Activated T-helper 1 cell treated with anti-CD3 and anti-CD28 coated beads, Interleukin-12 subunit alpha, Interleukin-12 subunit beta, Interleukin-2, Interleukin-4 antibody, amounts not matched to agents 30 ng/mL and 10 ng/mL and 1 ng/mL, durations not matched to agents 14 hours and 24 hours and 36 hours (primary cell): ENCODE measurements at regions of chr12 and their contacts with region 1.

Region 1: DNA sequence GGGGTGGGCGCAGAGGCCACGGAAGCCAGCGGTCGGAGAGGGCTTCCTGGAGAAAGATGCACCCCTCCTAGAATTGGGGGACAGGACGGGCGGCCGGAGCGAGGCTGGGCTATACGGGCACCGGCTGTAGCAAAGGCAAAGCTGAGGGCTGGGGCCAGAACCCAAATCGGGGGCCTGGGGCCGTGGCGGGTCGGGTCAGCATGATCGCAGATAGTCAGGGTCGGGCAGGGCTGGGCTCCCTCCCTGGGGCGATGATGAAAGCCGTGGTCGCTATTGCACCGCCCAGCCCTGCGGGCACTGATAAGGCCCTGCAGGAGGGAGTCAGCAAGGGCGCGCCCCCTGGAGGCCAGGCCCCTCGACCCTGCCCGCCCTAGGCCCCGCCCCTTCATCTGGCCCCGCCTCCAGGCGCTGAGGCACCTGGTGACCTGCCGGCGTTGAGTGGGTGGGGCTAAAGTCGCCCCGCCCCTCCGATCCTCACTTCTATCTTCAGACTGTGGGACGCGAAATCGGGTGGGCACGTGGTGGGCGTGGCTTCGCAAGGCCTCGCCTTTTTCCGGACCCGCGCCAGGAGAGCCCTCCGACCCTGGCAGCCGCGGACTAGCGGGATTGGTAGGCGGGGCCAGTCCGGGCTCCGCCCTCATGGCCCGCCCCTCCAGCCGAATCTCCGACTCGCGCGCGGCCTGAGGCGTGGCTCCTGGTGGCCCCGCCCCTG is 418 bp upstream of the SH2B3 start:
- DNase-seq: peak; percentile 95
- H3K4me3 Mint-ChIP-seq: peak overlapping the region; percentile 93
- H3K27ac Mint-ChIP-seq: peak overlapping the region; percentile 99
- H3K4me1 Mint-ChIP-seq: peaks cover 44% of the 10 kb centered on the region
- H3K27me3 Mint-ChIP-seq: peaks cover 10% of the 10 kb centered on the region

Region 2: GRCh38 chr12:111276146-111276545 is 129.2 kb before region 1 on chr12:
- intact Hi-C with region 1: no loop called
- DNase-seq: no peak
- H3K4me3 Mint-ChIP-seq: no peak overlapping the region
- H3K27ac Mint-ChIP-seq: no peak overlapping the region
- H3K4me1 Mint-ChIP-seq: no peaks in the 10 kb centered on the region
- H3K27me3 Mint-ChIP-seq: no peaks in the 10 kb centered on the region

Region 3: DNA sequence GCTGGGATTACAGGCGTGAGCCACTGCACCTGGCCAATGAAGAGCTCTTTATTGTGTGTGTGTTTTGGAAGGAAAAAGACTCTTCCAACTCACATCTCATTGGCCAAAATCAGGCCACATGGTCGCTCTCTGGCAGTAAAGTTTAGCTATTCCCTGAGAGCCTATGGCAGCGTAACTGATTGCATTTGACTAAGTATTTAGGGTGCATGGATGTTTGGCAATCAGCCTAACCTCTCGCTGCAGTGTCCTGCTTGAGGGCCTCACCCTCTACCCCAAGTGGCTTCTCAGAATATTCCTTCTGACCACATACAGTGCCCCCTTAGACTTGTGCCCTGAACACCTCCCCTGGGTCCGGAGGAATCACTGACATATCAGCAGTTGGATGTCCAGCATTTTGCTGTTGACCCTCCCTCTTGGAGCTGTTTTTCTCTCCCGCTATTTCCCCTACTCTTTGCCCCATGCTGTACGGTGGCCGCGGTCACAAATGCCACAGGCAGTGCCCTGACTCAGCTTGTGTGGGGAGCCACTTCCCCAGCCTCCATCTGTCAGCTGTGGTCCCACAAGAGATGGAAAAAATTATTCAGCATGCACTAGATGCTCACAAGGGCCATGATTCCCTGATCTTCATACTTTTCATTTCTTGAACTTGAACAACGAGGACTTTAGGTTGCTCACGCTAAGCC is 45.9 kb before region 1 on chr12:
- intact Hi-C with region 1: loop called (anchors 2 kb)
- DNase-seq: peak; percentile 3
- H3K4me3 Mint-ChIP-seq: peak overlapping the region; percentile 43
- H3K27ac Mint-ChIP-seq: peak overlapping the region; percentile 87
- H3K4me1 Mint-ChIP-seq: peaks cover 20% of the 10 kb centered on the region
- H3K27me3 Mint-ChIP-seq: peaks cover 7% of the 10 kb centered on the region

Region 4: DNA sequence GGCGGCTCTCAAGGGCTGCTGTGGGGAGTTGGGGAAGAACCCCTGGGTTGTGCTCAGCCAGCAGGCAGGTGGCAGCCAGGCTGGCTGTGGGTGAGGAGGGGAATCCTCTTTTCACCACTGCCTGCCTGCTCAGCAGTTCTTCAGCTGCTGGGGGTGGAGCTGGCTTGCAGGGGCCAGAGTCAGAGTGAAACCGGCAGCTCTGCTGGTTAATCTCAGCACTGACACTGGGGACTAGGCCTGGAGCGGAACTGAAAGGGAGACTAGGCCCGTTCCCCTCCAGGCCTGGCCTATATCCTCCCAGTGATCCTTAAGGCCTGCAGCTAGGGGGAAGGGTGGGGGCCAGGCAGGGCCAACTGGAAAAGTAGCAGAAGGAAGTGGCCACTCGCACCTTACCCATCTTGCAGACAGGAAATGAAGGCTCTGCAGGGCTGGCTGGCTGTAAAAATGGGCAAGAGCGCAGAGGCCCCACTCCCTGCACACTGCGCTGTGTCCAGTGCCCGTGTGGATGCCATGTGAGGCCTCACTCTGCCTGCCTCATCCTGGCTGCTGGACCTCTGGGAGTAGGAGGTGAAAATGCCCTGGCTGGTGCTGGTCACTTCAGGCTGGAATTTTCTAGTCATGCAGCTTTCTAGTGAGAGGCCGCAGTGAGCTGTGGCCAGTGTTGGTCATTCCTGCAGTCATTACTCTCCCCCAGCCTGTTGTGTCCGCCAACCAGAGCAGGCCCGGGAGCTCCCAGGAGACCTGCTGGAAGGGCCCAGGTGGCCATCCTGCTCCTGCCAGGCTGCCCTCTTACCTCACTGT is 39.8 kb after region 1 on chr12:
- intact Hi-C with region 1: loop called (anchors 1 kb)
- DNase-seq: peak; percentile 87
- H3K4me3 Mint-ChIP-seq: peak overlapping the region; percentile 71
- H3K27ac Mint-ChIP-seq: peak overlapping the region; percentile 82
- H3K4me1 Mint-ChIP-seq: peaks cover 88% of the 10 kb centered on the region
- H3K27me3 Mint-ChIP-seq: no peaks in the 10 kb centered on the region

Region 5: GRCh38 chr12:111546758-111547383 is 141.6 kb after region 1 on chr12:
- intact Hi-C with region 1: loop called (anchors 1 kb)
- DNase-seq: no peak
- H3K4me3 Mint-ChIP-seq: peak overlapping the region; percentile 11
- H3K27ac Mint-ChIP-seq: peak overlapping the region; percentile 95
- H3K4me1 Mint-ChIP-seq: peaks cover 29% of the 10 kb centered on the region
- H3K27me3 Mint-ChIP-seq: no peaks in the 10 kb centered on the region

Region 6: GRCh38 chr12:112012775-112013600 is 607.7 kb after region 1 on chr12 and contains the starts of genes ERP29 and TMEM116:
- intact Hi-C with region 1: loop called (anchors 2 kb)
- DNase-seq: peak; percentile 98
- H3K4me3 Mint-ChIP-seq: peak within 1 kb of the TSS; percentile 87
- H3K27ac Mint-ChIP-seq: peak within 1 kb of the TSS; percentile 89
- H3K4me1 Mint-ChIP-seq: peaks cover 51% of the 10 kb centered on the region
- H3K27me3 Mint-ChIP-seq: no peaks in the 10 kb centered on the region
- total RNA-seq, gene ERP29: 60.9 and 62.5 TPM in 2 replicates
- total RNA-seq, gene TMEM116: 10.6 and 11.0 TPM in 2 replicates